Activated CD4-positive, alpha-beta memory T cell treated with anti-CD3 and anti-CD28 coated beads for 36 hours (primary cell): ENCODE measurements at regions of chr10 and their contacts with region 1.

Region 1: GRCh38 chr10:27155066-27155754 is at the start of gene MASTL:
- DNase-seq: peak; percentile 96
- H3K4me3 Mint-ChIP-seq: peak within 1 kb of the TSS; percentile 97
- H3K27ac Mint-ChIP-seq: peak within 1 kb of the TSS; percentile 100
- H3K4me1 Mint-ChIP-seq: peaks cover 39% of the 10 kb centered on the region
- H3K27me3 Mint-ChIP-seq: no peaks in the 10 kb centered on the region
- total RNA-seq, gene MASTL: 44.2 to 50.4 TPM

Region 2: DNA sequence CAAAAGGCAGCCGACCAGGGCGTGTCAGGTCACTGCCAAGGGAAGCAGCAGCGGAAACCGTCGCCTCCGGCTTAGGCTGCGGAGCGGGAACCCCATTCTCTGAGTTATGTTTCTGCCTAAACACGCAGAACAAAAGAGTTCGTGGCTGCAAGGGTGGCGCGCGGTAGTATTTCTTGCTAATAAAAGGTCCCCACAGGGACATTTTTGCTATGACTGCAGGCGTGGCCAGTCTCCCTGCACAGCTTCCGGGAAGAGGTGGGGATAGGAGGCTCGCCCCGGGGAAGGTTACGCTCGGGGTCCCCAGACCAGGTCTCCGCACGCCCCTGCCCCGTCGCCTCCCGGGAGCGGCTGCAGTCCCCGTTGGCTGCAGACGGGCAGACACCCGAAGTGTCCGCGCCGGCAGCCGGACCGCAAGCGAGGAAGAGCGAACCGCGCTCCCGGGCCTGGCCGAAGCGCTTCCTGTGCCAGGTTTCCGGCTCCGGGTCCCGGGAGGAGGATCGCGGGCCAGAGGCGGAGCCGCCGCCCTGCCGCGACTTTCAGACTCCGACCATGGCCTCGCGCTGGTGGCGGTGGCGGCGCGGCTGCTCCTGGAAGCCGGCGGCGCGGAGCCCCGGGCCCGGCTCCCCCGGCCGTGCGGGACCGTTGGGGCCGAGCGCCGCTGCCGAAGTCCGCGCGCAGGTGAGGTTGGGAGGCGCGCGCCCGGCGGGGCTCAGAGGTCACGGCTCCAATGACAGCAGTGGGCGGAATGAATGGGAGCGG is 457.9 kb before region 1 on chr10 and contains the start of gene PDSS1:
- CTCF ChIA-PET with region 1: no interaction called
- POLR2A ChIA-PET with region 1: no interaction called
- intact Hi-C with region 1: loop called (anchors 2 kb)
- DNase-seq: peak; percentile 75
- H3K4me3 Mint-ChIP-seq: peak within 1 kb of the TSS; percentile 99
- H3K27ac Mint-ChIP-seq: peak within 1 kb of the TSS; percentile 92
- H3K4me1 Mint-ChIP-seq: peaks cover 25% of the 10 kb centered on the region
- H3K27me3 Mint-ChIP-seq: no peaks in the 10 kb centered on the region
- total RNA-seq, gene PDSS1: 12.9 to 15.4 TPM